Left lung (tissue), 14 donors: ENCODE measurements at regions of chr6 and their contacts with region 1.

Region 1: DNA sequence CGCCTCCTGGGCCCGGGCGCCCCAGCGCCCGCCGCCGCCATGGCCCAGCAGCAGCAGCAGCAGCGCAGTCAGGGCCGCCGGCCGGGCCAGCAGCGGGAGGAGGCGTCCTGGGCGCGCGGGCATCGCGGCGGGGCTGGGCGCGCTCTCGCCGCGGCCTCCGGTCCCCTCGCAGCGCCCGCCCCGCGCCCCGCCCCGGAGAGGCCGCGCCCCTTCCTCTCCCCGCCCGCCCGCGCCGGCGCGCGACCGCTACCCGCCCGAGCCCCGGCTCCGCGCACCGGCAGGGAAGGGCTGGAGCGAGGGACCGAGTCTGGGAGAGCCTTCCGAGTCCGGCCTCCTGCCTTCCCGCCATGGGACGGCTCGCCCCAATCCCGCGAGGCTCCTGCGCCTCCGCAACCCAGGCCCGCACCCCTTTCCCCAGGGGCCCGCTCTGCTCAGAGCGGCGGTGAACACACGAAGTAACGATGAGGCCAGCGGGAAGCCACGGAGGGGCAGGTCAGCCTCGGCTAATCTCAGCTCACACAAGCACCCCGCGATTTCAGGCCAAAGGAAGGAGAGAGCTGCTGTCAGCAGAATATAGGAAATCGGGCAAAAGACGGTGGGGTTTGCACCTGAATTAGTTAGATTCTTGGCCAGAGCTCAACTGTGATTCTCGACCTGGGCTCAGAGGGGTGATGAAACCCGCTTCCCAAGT is at the start of gene TXNDC5:
- DNase-seq: peak; percentile 68 to 96 (median 82)
- ATAC-seq: peak; percentile 95
- H3K4me3 ChIP-seq: peak within 1 kb of the TSS; percentile 78 to 81
- H3K27ac ChIP-seq: peak within 1 kb of the TSS; percentile 65 to 76
- H3K4me1 ChIP-seq: peaks cover 7 to 35% of the 10 kb centered on the region in 2 donors
- H3K27me3 ChIP-seq: peaks cover 0 to 8% of the 10 kb centered on the region in 2 donors
- CTCF ChIP-seq: no peak
- polyA plus RNA-seq, gene TXNDC5: 93.2 to 144 (median 109) TPM

Region 2: DNA sequence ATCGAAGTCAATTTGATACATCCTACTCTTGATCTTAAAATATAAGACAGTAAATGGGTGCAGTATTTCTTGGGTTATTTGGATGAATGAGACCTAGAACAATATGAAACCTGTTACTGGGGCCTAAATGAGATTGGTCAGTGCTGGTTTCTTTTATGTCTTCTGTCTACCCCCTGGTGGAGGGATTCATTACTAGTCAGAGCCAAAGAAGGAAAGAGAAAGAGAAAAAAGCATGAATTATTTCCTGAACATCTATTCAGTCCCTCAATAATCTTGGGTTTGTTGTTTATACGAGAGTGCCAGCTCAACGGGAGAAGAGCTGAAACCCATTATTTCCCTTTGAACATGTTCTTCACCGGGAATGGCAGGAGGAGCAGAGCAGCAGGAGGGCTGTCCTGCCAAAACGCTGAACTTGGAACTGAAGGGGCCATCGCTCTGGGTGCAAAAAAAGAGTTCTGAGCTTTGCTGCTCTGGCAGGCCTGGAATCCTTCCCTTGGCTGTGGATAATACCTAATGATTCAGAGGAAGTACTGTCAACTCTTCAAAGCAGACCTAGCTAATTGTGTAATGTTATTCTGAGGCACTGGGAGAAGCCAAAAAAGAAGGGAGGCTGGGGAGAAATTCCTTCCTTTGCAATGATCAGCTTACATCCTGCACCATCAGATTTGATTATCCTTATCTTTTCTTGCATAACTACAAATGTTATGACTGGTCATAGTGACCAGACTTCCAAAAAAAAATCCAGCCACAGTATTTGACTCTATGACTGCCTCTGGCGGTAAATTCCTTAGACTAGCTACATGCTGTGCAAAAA is 81.4 kb after region 1 on chr6:
- intact Hi-C with region 1: loop called in 1 of 2 experiments (anchors 10 kb)
- DNase-seq: peak in 2 of 4 donors; percentile 39 to 76
- ATAC-seq: peak; percentile 72
- H3K4me3 ChIP-seq: no peak overlapping the region
- H3K27ac ChIP-seq: peak overlapping the region in 1 of 2 donors; percentile 40
- H3K4me1 ChIP-seq: no peaks in the 10 kb centered on the region
- H3K27me3 ChIP-seq: no peaks in the 10 kb centered on the region
- CTCF ChIP-seq: peak; percentile 21 to 36